Activated CD8-positive, alpha-beta memory T cell treated with anti-CD3 and anti-CD28 coated beads, Interleukin-2, amount 10 ng/mL, durations not matched to agents 7 days and 5 days (primary cell): ENCODE measurements at regions of chr11 and their contacts with region 1.

Region 1: GRCh38 chr11:78564490-78565467 is 9.9 kb downstream of the NARS2 start:
- DNase-seq: peak; percentile 58
- ATAC-seq: peak; percentile 64
- H3K4me3 Mint-ChIP-seq: no peak overlapping the region
- H3K27ac Mint-ChIP-seq: peak overlapping the region; percentile 46
- H3K4me1 Mint-ChIP-seq: peaks cover 38% of the 10 kb centered on the region
- H3K27me3 Mint-ChIP-seq: no peaks in the 10 kb centered on the region

Region 2: GRCh38 chr11:78139422-78140391 is 425.1 kb before region 1 on chr11 and contains the start of gene ALG8:
- CTCF ChIA-PET with region 1: interaction called, 11 read pairs
- DNase-seq: peak; percentile 97
- ATAC-seq: peak; percentile 95
- H3K4me3 Mint-ChIP-seq: peak within 1 kb of the TSS; percentile 78
- H3K27ac Mint-ChIP-seq: peak within 1 kb of the TSS; percentile 88
- H3K4me1 Mint-ChIP-seq: peaks cover 40% of the 10 kb centered on the region
- H3K27me3 Mint-ChIP-seq: no peaks in the 10 kb centered on the region
- total RNA-seq, gene ALG8: 47.3 to 51.6 TPM

Region 3: GRCh38 chr11:78228467-78228866 is 336.3 kb before region 1 on chr11:
- CTCF ChIA-PET with region 1: interaction called, 26 read pairs
- DNase-seq: peak; percentile 55
- ATAC-seq: peak; percentile 80
- H3K4me3 Mint-ChIP-seq: no peak overlapping the region
- H3K27ac Mint-ChIP-seq: no peak overlapping the region
- H3K4me1 Mint-ChIP-seq: peaks cover 32% of the 10 kb centered on the region
- H3K27me3 Mint-ChIP-seq: no peaks in the 10 kb centered on the region

Region 4: GRCh38 chr11:78432058-78432515 is 132.7 kb before region 1 on chr11:
- CTCF ChIA-PET with region 1: interaction called, 22 read pairs
- DNase-seq: no peak
- ATAC-seq: no peak
- H3K4me3 Mint-ChIP-seq: no peak overlapping the region
- H3K27ac Mint-ChIP-seq: no peak overlapping the region
- H3K4me1 Mint-ChIP-seq: peaks cover 19% of the 10 kb centered on the region
- H3K27me3 Mint-ChIP-seq: no peaks in the 10 kb centered on the region

Region 5: DNA sequence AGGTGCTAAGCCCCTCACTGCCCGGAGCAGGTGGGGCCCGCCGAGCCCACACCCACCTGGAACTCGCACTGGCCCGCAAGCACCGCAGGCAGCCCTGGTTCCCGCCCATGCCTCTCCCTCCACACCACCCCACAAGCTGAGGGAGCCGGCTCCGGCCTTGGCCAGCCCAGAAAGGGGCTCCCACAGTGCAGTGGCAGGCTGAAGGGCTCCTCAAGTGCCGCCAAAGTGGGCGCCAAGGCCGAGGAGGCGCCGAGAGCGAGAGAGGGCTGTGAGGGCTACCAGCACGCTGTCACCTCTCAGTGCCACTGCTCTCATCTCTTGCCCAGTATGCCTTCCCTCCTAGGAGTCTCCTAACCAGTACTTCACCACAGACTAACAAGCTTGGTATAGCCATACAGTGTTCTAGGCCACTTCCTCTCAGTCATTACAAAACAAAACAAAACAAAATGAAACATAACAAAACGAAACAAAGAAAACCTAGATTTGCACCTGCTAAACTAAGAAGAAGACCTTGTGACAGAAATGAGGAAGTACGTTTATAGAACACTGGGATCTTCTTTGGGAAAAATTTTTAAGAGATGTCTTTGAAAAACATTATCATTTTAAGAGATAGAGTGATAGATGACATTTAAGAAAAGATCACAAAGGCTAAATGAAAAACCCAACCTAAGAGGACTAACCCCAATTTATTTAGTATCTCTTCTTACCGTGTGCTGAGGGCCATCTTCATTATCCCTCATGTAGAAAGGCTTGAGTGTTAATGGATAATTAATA is 99.4 kb before region 1 on chr11:
- CTCF ChIA-PET with region 1: interaction called, 19 read pairs
- DNase-seq: peak; percentile 81
- ATAC-seq: peak; percentile 100
- H3K4me3 Mint-ChIP-seq: peak overlapping the region; percentile 52
- H3K27ac Mint-ChIP-seq: peak overlapping the region; percentile 93
- H3K4me1 Mint-ChIP-seq: peaks cover 36% of the 10 kb centered on the region
- H3K27me3 Mint-ChIP-seq: no peaks in the 10 kb centered on the region

Region 6: DNA sequence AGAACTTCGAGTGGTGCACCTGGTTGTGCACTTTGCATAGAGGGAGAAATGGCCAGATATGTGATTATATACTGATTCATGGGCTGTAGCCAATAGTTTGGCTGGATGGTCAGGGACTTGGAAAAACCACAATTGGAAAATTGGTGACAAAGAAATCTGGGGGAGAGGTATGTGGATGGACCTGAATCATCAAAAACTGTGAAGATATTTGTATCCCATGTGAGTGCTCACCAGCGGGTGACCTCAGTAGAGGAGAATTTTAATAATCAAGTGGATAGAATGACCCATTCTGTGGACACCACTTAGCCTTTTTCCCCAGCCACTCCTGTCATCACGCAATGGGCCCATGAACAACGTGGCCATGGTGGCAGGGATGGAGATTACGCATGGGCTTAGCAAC is 57.9 kb after region 1 on chr11:
- CTCF ChIA-PET with region 1: no interaction called
- DNase-seq: no peak
- ATAC-seq: no peak
- H3K4me3 Mint-ChIP-seq: no peak overlapping the region
- H3K27ac Mint-ChIP-seq: no peak overlapping the region
- H3K4me1 Mint-ChIP-seq: no peaks in the 10 kb centered on the region
- H3K27me3 Mint-ChIP-seq: peaks cover 14% of the 10 kb centered on the region